Dorsolateral prefrontal cortex (tissue), 120 donors: ENCODE measurements at regions of chr2 and their contacts with region 1.

Region 1: DNA sequence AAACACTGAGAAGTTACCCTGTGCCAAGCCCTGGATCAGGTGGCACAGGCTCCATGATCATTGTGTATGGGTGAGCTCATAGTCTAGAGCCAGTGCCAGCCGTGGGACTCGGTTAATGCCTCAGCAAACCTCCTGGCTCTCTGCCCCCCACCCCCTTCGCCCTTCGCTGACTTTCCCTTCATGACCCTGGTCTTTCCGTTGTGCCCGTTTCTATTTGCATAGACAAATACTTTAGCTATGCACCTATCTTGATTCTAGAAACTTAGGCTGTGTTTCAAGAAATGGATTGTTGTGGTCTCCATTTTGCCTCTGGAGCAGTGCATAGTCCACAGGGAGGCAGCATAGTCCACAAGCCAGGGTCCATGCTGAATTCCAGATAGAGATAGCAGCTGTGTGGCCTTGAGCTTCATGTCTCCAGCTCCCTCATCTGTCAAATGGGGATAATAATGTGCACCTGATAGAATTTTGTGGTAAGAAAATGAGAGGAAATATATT is 44.8 kb upstream of the KDM3A start:
- DNase-seq: peak in 9 of 10 donors; percentile 17 to 77 (median 52)
- H3K4me3 ChIP-seq: peak overlapping the region in 39 of 59 donors; percentile 3 to 49 (median 28)
- H3K27ac ChIP-seq: no peak overlapping the region
- H3K27me3 ChIP-seq: no peaks in the 10 kb centered on the region
- CTCF ChIP-seq: peak in 54 of 56 donors; percentile 35 to 72 (median 54)

Region 2: GRCh38 chr2:85635636-85636035 is 760.7 kb before region 1 on chr2:
- intact Hi-C with region 1: no loop called
- DNase-seq: no peak
- H3K4me3 ChIP-seq: no peak overlapping the region
- H3K27ac ChIP-seq: peak overlapping the region in 10 of 59 donors; percentile 10 to 56 (median 26)
- H3K27me3 ChIP-seq: no peaks in the 10 kb centered on the region
- CTCF ChIP-seq: no peak

Region 3: DNA sequence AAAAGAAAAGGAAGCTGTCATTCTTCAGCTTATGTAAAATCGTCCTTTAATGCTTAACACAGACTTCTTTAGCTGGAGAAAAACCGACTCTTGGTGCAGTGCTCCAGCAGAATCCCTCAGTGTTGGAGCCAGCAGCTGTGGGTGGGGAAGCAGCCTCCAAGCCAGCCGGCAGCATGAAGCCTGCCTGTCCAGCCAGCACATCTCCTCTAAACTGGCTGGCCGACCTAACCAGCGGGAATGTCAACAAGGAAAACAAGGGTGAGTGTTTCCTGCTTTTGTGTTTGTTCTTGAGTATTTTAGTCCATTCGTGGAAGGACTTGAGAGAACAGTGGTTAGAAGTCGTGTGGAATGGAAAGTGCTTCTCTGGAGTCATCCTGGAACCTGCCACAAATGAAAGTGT is 83.8 kb after region 1 on chr2:
- intact Hi-C with region 1: loop called in 1 of 2 experiments (anchors 10 kb)
- DNase-seq: peak in 8 of 10 donors; percentile 18 to 71 (median 62)
- H3K4me3 ChIP-seq: peak overlapping the region in 22 of 59 donors; percentile 1 to 41 (median 24)
- H3K27ac ChIP-seq: peak overlapping the region in 51 of 59 donors; percentile 16 to 88 (median 64)
- H3K27me3 ChIP-seq: no peaks in the 10 kb centered on the region
- CTCF ChIP-seq: no peak